ENCODE measurements at regions of chr12 and their contacts with region 1.

Region 1: DNA sequence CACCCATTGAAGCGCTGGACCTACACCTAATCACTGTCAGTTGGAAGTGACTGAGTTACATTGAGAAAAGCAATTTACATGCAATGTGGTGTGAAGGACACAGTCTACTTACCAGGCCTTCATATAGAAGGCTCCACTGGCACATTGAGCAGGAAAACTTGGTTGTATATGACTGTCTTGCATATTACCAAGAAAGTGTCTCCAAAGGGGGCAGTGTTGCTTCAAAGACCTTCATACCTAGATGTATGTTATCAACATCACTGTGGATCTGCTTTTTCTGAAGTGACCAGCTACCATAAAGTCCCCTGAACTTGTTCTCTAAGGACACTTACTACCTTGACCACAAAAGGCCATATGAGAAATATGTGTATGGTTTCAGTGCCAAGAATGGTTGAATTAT is 64.1 kb downstream of the NELL2 start:
- DNase-seq: peak; percentile 87
- H3K4me3 Mint-ChIP-seq: no peak overlapping the region
- H3K27ac Mint-ChIP-seq: no peak overlapping the region
- H3K4me1 Mint-ChIP-seq: peaks cover 21% of the 10 kb centered on the region
- H3K27me3 Mint-ChIP-seq: no peaks in the 10 kb centered on the region

Region 2: DNA sequence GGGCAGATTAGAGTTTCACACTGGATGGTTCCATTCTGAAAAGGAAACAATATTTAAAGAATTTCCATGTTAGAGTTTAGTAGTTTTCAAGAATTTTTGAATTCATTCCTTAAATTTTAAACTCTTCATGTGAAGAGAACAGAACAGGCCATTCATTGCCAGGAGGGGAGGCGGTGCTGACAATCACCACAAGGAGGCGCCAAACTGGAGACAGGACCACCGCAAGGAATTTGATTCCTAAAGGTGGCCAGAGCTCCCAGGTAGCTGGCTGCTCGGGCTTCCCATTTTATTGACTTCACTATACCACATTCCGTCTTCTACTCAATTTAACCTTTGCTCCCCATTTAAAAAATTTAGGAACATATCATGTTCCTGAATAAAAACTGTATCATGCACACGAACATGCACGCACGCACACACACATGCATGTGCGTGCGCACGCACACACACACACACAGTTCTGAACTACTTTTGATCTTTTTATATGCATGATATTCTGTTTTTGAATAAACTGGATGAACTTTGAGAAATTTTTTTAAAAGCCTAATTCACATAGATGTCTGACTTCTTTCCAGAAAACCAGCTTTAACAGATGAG is 37.1 kb before region 1 on chr12:
- intact Hi-C with region 1: loop called (anchors 5 kb)
- DNase-seq: peak; percentile 86
- H3K4me3 Mint-ChIP-seq: no peak overlapping the region
- H3K27ac Mint-ChIP-seq: no peak overlapping the region
- H3K4me1 Mint-ChIP-seq: peaks cover 5% of the 10 kb centered on the region
- H3K27me3 Mint-ChIP-seq: no peaks in the 10 kb centered on the region

Region 3: GRCh38 chr12:45089411-45090115 is 277.5 kb after region 1 on chr12:
- intact Hi-C with region 1: no loop called
- DNase-seq: no peak
- H3K4me3 Mint-ChIP-seq: no peak overlapping the region
- H3K27ac Mint-ChIP-seq: no peak overlapping the region
- H3K4me1 Mint-ChIP-seq: no peaks in the 10 kb centered on the region
- H3K27me3 Mint-ChIP-seq: peaks cover 4% of the 10 kb centered on the region

Measured in activated CD4-positive, alpha-beta T cell treated with anti-CD3 and anti-CD28 coated beads, Interleukin-2, amount 10 ng/mL, durations not matched to agents 24 days and 14 days (primary cell).